ENCODE measurements at regions of chr4 and their contacts with region 1.

Region 1: DNA sequence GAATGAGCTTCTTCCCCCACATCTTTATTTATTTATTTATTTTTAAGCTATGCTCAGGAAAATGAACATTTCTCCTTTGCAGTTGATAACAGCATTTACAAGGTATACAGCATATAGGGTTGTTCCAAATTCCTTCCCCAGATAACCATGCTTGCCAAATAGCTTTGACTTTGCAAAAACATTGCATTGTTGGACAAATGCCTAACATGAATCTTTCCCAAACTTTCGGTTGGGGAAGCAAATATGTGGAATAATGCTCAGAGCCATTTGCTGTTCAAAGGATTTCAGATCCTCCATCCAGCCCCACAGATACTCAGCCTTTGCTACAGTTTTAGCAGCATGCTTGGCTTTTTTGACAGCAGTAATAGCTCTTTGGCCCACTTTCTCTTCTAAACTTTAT is 127.2 kb upstream of the AGA start:
- DNase-seq: no peak
- H3K4me3 ChIP-seq: no peak overlapping the region
- CTCF ChIP-seq: no peak
- POLR2A ChIP-seq: no peak

Region 2: DNA sequence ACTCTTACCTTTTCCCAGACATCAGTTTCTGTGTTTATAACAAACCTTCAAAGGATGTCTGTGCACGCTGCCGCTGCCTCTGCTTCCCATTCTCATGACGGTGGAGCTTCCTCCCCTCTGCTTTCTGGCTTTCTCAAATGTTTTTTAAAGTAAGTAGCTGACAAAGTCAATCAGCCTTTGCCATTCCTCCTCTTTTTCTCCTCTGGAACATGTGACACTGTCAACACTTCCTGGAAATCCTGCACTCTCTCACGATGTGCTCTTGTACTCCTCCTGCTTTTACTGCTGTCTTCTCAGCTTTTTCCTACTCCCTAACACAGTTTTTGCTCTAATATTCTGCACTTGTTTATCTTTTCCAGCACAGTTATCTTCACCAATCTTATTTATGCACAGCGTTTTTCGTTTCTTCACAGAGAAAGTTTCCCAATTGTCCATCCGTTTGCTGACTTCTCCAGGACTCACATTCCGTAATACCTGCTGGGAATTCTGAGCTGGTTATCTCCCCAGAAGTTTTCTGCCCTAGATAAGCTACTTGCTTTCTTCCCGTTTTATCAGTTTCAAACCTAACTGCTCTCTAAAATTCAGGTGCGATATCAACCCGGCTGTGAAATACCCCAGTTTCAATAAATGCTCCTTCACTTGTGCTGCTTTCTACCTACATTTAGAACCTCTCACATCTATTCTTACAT is 338.4 kb after region 1 on chr4:
- intact Hi-C with region 1: no loop called
- DNase-seq: no peak
- H3K4me3 ChIP-seq: no peak overlapping the region
- CTCF ChIP-seq: no peak
- POLR2A ChIP-seq: no peak

Region 3: DNA sequence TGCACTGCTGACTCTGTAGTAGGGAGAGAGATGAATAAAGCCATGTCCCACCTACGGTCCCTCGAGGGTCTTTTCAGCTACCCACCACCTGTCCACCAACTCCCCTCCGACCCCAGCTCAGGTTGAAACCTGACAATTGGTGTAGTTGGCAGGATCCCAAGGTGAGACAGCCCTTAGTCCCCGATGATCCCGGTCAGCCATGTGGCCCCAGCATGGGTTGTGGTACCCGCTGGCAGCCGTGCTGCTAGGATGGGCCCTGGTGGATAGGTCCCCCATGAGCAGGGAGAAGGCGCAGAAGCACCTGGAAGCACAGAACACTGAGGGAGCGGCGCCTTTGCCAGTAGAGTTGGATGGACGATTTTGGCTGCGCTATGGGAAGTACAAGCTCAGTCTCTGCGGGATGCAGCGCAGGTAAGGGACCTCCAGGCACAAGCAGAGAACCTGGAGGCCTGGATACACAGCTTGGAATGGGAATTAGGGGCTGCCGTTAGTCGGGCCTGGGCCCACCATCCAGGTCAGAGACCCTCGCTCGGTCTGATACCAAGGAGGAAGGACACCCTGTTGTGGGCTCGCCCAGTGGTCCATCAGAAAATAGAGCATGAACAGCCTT is 567.4 kb after region 1 on chr4:
- intact Hi-C with region 1: no loop called
- DNase-seq: peak in 1 of 2 donors; percentile 61
- H3K4me3 ChIP-seq: no peak overlapping the region
- CTCF ChIP-seq: no peak
- POLR2A ChIP-seq: no peak

Region 4: DNA sequence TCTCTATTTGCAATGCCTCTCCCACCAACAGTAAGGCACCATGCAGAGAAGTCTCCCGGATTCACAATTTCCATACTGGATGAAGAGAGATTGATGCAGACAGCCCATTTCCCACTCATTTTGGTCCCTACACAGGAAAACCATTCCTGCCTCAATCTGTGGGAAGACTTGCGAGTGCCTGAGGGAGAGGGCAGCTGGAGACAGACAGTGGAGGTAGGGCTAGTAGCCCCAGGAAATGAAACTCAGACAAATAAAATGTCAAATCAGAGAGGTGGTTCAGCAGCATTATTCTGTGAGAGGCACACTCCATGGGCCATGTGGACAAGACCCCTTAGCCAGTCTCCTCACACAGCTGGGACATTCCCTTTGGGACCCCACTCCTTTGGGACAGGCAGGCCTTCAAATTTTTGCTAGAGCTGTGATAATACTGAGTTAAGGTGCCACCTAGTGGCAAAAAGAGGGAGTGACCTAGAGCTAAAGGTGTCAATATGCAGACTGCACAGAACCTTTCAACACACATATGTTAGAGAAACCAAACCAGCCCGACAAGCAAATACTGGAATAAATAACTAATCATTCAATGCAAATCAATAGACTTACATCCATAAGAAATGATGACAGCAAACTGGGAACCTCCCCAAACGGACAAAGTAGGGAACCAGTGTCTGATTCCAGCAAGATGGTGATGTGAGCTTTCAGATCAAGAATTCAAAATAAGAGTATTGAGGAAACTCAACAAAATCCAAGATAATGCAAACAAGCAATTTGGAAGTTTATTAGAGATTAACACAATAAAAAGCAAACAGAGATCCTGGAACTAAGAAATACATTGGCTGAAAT is 1738.1 kb after region 1 on chr4:
- intact Hi-C with region 1: loop called (anchors 10 kb)
- DNase-seq: no peak
- H3K4me3 ChIP-seq: no peak overlapping the region
- CTCF ChIP-seq: no peak
- POLR2A ChIP-seq: no peak

Measured in lower leg skin (tissue), 4 donors.